KBM-7 (cell line): ENCODE measurements at regions of chr13 and their contacts with region 1.

Region 1: DNA sequence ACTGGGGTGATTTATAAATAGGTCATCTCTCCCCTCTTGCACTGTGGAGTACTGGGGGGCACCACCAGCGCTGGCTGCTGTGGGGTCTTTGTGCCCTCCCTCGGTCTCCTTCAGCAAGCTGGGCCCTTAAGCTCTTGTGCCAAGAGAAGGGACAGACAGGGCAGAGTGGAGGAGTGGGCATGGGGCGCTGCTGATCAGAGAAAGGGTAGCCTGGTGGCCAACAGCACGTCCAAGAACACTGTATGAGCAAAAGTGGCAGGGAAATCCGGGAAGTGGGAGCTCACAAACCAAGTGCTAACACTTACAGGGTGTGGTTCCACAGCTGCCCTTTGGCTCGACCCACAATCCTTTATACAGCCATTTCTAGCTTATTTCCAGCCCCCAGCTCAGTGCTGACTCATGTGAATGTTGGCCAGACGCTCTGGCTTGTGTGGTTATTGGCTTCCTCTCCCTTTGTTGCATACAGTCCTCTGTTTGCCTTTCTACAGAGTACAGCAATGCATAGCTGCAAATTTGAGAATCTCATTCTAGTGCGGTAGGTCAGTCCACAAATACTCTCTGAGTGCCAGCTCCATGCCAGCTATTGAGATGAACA is 298.8 kb downstream of the SHISA2 start:
- DNase-seq: no peak

Region 2: DNA sequence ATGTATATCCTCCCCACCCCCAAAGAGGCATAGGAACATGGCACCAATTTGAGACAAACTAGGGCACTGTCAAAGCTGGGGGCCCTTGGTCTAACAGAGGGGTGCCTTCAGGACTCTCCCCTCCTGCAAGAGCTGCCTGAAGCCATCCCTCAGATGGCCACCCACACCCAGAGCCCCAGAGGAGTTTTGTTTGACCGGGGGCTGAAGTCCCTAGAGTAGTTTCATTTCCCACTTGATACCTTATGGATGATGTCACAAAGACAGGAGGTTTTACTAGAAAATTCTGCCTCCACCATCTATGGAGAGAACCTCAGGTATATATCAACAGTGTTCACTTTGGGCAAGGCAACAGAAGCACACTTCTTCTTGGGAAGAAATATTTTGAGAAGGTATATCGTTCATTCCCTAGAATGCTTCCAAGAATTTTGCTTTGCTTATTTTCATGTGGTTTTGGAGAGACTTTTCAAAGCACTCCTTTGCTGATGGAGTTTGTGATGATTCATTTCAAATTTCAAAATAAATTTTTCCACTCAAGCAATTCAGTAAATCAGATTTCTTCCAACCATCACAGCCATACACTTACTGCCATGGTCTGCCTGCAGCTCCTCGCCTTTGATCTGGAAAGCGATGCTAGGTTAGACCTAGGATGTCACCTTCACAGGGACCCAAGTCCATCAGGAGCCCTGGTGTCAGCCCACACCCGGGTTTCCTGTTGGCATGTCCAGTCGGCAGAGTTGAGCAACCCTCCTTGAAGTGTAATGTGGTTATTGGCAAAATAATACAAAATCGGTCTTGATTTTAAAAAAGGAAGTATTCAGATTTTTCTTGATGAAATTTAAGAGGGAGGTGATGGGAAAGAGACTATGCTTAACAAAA is 91.7 kb after region 1 on chr13:
- in situ Hi-C with region 1: no loop called
- DNase-seq: no peak

Region 3: GRCh38 chr13:25874907-25875306 is 121.9 kb after region 1 on chr13:
- in situ Hi-C with region 1: loop called (anchors 25 kb)
- DNase-seq: peak; percentile 2